Common myeloid progenitor, CD34-positive (primary cell): ENCODE measurements at regions of chr1 and their contacts with region 1.

Region 1: GRCh38 chr1:89843281-89844121 is 22.7 kb downstream of the LRRC8D start:
- DNase-seq: peak; percentile 73 to 87 (median 81)
- H3K4me3 ChIP-seq: peak overlapping the region; percentile 63 to 94 (median 87)
- H3K27ac ChIP-seq: peak overlapping the region in 1 of 2 experiments; percentile 66
- H3K4me1 ChIP-seq: peaks cover 13 to 58% (median 39%) of the 10 kb centered on the region in 4 experiments
- H3K27me3 ChIP-seq: no peaks in the 10 kb centered on the region

Region 2: DNA sequence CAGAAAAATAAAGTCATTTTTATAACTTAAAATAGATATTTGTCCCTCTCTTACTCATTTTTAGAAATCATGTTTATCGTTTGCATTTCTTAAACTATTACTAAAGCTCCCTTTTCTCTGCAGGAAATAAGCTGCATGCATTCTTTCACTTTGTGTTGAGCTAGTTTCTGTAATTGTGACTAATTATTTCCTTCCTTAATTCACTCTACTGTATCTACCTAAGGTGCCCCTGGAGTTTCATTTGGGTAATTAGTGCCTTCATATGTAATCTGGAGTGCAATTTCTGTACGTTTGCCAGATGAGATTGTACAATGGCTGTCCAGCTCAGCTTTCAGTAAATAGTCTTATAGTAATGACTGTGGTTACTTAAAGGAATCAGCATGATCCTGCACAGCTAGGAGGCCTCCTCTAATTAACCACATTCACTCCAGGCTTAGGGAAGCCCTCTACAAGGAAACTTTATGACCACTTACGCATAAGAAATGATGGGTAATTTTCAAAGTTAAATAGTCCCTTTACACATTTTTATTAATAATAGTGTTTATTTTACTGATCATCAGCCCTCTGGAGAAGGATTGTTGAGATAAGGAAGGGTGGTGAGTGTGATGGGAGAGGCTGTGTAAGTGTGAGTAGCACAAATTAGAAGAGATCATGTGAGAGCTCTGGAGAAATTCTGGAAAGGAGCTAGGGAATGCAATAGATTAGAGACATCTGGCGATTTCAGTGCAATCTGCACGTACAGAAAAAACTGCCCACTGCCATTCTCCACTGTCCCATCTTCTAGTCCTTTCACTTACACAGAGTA is 123.8 kb before region 1 on chr1:
- CTCF ChIA-PET with region 1: no interaction called
- POLR2A ChIA-PET with region 1: no interaction called
- DNase-seq: peak; percentile 66 to 88 (median 85)
- H3K4me3 ChIP-seq: peak overlapping the region in 5 of 7 experiments; percentile 5 to 69 (median 22)
- H3K27ac ChIP-seq: peak overlapping the region in 1 of 2 experiments; percentile 70
- H3K4me1 ChIP-seq: peaks cover 20 to 56% (median 29%) of the 10 kb centered on the region in 4 experiments
- H3K27me3 ChIP-seq: no peaks in the 10 kb centered on the region

Region 3: DNA sequence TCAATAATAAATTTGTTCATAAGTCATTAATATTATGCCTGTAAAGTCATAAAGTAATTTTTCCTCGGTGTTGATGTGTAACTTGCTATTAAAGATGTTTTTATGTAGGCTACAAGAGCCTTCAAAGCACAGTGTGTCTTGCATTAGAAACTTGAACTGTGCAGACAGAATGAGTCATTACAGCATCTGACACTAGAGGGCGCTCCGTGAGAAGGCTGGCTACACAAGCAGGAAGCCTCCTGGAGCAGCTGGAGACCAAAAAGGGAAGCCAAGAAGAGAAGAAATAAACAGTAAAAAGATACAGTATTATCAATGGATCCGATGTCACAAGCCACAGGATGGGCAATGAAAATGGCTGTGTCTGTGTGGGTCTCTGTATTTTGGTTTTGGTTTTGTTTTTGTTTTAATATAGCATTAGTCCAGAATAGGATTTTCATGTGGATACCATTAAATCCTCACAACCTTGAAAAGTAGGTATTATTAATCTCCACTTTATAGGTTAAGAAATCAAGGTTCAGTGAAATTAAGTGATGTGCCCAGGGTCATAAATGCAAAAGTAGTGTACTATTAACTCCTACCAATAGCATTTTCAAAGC is 38.8 kb before region 1 on chr1:
- CTCF ChIA-PET with region 1: interaction called, 11 read pairs
- POLR2A ChIA-PET with region 1: no interaction called
- DNase-seq: peak; percentile 91 to 98 (median 96)
- H3K4me3 ChIP-seq: peak overlapping the region in 2 of 7 experiments; percentile 16 to 37
- H3K27ac ChIP-seq: no peak overlapping the region
- H3K4me1 ChIP-seq: peaks cover 5 to 31% (median 16%) of the 10 kb centered on the region in 4 experiments
- H3K27me3 ChIP-seq: no peaks in the 10 kb centered on the region

Region 4: GRCh38 chr1:89833183-89834082 is 10.1 kb before region 1 on chr1:
- CTCF ChIA-PET with region 1: interaction called, 16 read pairs
- POLR2A ChIA-PET with region 1: no interaction called
- DNase-seq: no peak
- H3K4me3 ChIP-seq: no peak overlapping the region
- H3K27ac ChIP-seq: no peak overlapping the region
- H3K4me1 ChIP-seq: peaks cover 0 to 32% (median 15%) of the 10 kb centered on the region in 4 experiments
- H3K27me3 ChIP-seq: no peaks in the 10 kb centered on the region

Region 5: DNA sequence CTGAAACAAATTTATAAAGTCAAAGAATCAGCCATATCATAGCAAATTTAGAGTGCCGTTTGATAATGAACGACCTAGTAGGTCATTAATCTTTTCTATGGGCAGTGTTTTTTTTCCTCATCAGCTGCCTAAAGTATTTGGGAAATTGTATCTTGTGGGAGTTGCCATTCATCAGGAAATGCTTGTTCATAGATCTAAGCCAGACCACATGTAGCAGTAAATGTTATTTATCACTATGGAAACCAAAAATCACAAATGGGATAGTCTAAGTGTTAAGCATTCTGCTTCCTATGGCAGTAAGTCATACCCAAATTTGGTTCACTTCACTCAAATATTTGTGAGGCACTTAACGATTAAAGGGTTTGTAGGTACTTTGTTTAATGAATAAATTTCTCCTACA is 30.3 kb after region 1 on chr1:
- CTCF ChIA-PET with region 1: interaction called, 13 read pairs
- POLR2A ChIA-PET with region 1: no interaction called
- DNase-seq: peak; percentile 79 to 89 (median 81)
- H3K4me3 ChIP-seq: peak overlapping the region in 2 of 7 experiments; percentile 8 to 26
- H3K27ac ChIP-seq: peak overlapping the region; percentile 78 to 80
- H3K4me1 ChIP-seq: peaks cover 13 to 42% (median 21%) of the 10 kb centered on the region in 4 experiments
- H3K27me3 ChIP-seq: no peaks in the 10 kb centered on the region

Region 6: DNA sequence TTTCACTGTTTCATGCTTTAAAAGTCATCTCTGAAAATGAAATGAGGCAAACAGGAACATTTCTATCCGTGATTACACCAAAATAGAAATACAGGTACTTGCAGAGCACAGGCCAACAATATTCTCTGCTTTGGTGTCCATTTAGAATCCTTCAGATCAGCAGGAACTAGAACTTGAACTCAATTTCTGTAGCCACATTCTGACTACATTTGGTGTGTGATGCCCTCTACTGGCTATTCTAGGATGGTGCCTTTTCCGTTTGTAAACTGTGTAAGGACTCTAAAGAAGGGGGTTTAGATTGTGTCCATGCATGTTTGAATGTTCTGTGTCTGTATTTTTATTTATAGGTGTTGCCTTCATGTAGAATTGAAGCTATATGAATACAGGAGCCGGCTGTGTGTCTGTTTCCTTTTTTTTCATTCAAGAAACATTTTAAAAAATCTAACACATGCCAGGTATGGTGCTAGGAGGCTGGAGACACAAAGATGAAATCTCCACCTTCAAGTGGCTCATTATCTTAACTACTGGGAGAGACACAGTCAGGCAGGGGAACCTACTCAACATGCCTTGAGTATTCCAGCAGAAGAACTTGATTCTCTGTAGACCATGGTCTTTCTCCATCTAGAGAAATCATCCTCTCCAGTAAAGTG is 143.8 kb after region 1 on chr1:
- CTCF ChIA-PET with region 1: interaction called, 35 read pairs
- POLR2A ChIA-PET with region 1: no interaction called
- DNase-seq: peak; percentile 77 to 89 (median 84)
- H3K4me3 ChIP-seq: no peak overlapping the region
- H3K27ac ChIP-seq: no peak overlapping the region
- H3K4me1 ChIP-seq: peaks cover 0 to 4% (median 0%) of the 10 kb centered on the region in 4 experiments
- H3K27me3 ChIP-seq: no peaks in the 10 kb centered on the region